PC-9 (cell line): ENCODE measurements at regions of chr19 and their contacts with region 1.

Region 1: DNA sequence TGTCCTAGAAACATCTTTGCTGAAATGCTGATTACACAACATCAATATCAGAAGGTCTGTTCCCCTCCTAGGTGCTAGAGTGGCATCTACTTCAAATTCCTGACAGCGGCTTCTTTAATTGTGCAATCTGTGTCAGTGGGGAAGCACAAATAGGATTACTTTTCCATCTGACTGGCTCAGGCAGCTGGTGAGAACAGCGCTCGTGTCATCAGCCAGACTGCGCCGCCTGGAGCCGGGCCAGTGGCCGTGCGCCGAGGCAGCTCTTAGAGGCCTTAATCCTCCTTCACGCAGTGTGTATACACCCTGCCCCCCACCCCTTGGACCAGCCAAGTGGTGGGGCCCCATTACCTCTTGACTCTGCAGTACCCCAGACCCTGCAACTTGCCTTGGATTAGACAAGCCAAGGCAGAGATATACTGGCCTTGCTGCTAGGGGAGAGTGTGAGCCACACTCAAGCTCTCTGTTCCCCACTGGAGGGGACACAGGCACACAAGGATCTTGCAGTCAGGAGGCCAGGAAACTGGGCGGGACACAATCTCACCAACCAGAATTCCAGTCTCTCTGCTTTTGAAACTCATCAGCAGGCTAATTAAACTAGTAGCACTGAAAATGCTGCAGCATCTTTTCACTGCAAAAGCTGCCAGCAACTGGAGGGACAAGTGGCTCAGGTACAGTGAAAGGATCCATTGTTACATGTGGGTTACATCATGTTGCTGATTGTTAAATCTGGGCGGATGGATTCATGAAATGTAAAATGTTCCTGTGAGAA is 48.9 kb upstream of the EPHX3 start:
- DNase-seq: peak; percentile 63 to 77
- H3K4me3 ChIP-seq: no peak overlapping the region
- H3K27ac ChIP-seq: peak overlapping the region; percentile 87
- H3K4me1 ChIP-seq: peaks cover 54% of the 10 kb centered on the region
- H3K27me3 ChIP-seq: no peaks in the 10 kb centered on the region
- CTCF ChIP-seq: no peak

Region 2: DNA sequence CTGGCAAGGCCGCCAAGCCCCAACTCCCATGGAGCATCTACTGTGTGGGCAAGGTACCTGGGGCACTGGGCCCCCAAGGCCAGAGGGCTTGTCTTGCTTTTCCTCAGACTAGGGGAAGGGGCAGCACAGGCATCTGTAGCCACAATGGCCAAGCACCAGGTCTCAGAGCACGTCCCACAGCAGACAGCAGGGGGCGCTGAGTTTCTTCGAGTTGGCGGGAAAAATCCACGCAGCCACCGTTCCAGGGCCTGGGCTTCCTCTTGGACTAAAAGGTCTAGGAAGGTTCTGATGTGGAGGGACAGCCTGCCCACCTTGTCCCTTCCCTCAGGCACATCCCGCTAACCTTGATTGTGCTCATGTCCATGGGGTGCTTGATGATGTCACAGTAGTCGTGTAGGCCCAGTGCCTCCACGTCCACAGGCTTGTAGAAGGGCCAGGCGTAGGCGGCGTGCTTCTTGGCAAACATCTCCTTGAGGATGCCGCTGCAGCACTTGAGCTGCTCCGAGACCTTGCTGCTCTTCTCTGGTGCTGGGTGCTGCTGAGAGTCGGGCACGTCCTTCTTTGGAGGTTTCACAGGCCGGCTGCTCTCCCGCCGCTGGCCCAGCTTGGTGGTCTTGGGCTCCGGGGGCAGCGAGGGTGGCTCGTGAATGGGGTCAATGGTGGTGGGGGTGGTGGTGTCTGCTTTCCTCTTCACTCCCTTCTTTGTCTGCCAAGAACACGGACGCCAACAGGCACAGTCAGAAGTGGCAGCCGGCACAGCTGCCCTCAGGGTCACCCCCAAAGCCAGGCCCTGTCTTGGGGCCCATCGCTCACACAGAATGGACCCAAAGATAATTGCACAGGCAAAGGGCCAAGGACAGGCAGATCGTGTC is 16.8 kb before region 1 on chr19:
- CTCF ChIA-PET with region 1: interaction called, 14 read pairs
- POLR2A ChIA-PET with region 1: no interaction called
- intact Hi-C with region 1: no loop called
- DNase-seq: peak in 1 of 2 experiments; percentile 50
- H3K4me3 ChIP-seq: no peak overlapping the region
- H3K27ac ChIP-seq: no peak overlapping the region
- H3K4me1 ChIP-seq: no peaks in the 10 kb centered on the region
- H3K27me3 ChIP-seq: no peaks in the 10 kb centered on the region
- CTCF ChIP-seq: peak; percentile 86

Region 3: GRCh38 chr19:15297416-15298224 is 16.5 kb after region 1 on chr19:
- CTCF ChIA-PET with region 1: no interaction called
- POLR2A ChIA-PET with region 1: interaction called, 15 read pairs
- intact Hi-C with region 1: no loop called
- DNase-seq: no peak
- H3K4me3 ChIP-seq: no peak overlapping the region
- H3K27ac ChIP-seq: peak overlapping the region; percentile 58
- H3K4me1 ChIP-seq: peaks cover 41% of the 10 kb centered on the region
- H3K27me3 ChIP-seq: no peaks in the 10 kb centered on the region
- CTCF ChIP-seq: no peak